CD8-positive, alpha-beta memory T cell (primary cell): ENCODE measurements at regions of chr12 and their contacts with region 1.

Region 1: DNA sequence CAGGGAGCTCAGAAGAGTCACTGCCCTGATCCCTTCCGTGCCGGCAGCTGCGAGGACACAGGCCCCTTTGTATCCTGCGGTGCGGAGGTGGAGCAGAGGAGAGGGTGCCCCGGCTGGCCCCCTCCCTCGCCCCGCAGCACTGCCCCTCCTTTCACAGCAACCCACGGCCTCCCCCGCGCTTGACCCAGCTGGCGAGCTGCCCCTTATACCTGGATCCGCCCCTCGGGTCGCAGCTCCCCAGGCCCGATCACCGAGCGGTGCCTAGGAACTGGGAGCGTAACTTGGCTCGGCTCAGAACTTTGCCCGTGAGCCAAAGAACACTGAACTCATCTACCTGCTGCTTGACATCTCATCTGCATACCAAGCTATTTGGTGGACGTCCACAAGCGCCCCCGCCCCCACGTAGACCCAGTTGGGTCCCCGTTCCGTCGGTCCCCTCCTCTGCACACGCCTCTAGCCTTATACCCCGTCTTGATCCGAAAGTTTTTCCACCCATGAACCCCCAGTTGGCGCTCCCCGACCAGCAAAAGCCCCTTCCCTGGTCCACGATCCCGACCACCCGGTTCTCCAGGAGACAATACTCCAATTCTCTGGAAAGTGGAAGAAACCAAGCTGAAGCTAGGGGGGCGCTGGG is 697 bp upstream of the DNAJC14 start:
- DNase-seq: peak in 3 of 5 donors; percentile 8 to 63 (median 42)
- H3K4me3 ChIP-seq: peak overlapping the region; percentile 96
- H3K4me3 Mint-ChIP-seq: peak overlapping the region; percentile 97 to 99 (median 98)
- H3K27ac ChIP-seq: peak overlapping the region; percentile 79
- H3K27ac Mint-ChIP-seq: peak overlapping the region; percentile 84 to 98 (median 96)
- H3K4me1 ChIP-seq: peaks cover 50% of the 10 kb centered on the region
- H3K4me1 Mint-ChIP-seq: peaks cover 46 to 69% (median 54%) of the 10 kb centered on the region in 3 donors
- H3K27me3 ChIP-seq: no peaks in the 10 kb centered on the region
- H3K27me3 Mint-ChIP-seq: no peaks in the 10 kb centered on the region

Region 2: DNA sequence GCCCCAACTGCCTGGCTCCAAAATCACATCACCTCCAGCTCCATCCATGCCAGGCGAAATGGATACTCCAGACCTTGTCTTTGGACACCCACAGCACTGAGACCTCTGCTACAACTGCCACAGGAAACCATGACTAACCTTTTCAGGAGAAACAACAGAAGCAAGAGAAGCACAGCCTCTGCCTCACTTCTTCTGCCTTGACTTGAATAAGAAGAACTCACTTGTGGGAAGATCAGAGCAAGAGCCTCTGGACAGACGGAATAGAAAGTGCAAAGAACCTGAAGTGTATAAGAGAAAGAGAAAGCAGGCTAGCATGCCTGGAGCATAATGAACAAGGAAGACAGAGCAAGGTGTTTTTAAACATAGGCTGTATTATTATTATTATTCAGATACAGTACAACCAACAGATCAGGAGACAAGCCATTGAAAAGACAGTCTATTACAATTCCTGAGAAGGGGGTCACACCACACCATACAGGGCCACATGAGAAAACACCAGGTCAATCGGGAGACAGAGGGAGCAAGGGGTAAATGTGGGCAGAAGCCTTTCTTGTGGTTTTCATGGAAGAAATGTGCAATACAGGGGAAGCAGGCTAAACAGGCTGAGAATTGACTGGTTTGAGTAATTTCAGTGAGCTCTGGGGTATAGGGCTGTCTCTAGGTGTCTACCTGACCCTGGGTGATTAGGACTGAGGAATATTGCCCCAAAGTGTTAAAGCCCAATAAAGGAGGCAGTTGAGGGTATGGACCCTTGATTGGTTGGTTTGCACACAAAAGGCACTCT is 200.8 kb before region 1 on chr12:
- CTCF ChIA-PET with region 1: no interaction called
- POLR2A ChIA-PET with region 1: no interaction called
- DNase-seq: no peak
- H3K4me3 ChIP-seq: no peak overlapping the region
- H3K4me3 Mint-ChIP-seq: no peak overlapping the region
- H3K27ac ChIP-seq: no peak overlapping the region
- H3K27ac Mint-ChIP-seq: no peak overlapping the region
- H3K4me1 ChIP-seq: no peaks in the 10 kb centered on the region
- H3K4me1 Mint-ChIP-seq: no peaks in the 10 kb centered on the region
- H3K27me3 ChIP-seq: no peaks in the 10 kb centered on the region
- H3K27me3 Mint-ChIP-seq: peaks cover 10 to 12% of the 10 kb centered on the region in 2 donors

Region 3: GRCh38 chr12:55817346-55818139 is 12.5 kb before region 1 on chr12 and contains the starts of genes ORMDL2 and SARNP:
- CTCF ChIA-PET with region 1: interaction called, 52 read pairs
- POLR2A ChIA-PET with region 1: interaction called, 105 read pairs
- DNase-seq: peak; percentile 91 to 99 (median 98)
- H3K4me3 ChIP-seq: peak within 1 kb of the TSS; percentile 94
- H3K4me3 Mint-ChIP-seq: no peak within 1 kb of the TSS
- H3K27ac ChIP-seq: peak within 1 kb of the TSS; percentile 86
- H3K27ac Mint-ChIP-seq: no peak within 1 kb of the TSS
- H3K4me1 ChIP-seq: peaks cover 39% of the 10 kb centered on the region
- H3K4me1 Mint-ChIP-seq: peaks cover 27 to 39% (median 36%) of the 10 kb centered on the region in 3 donors
- H3K27me3 ChIP-seq: no peaks in the 10 kb centered on the region
- H3K27me3 Mint-ChIP-seq: no peaks in the 10 kb centered on the region
- total RNA-seq, gene ORMDL2: 49.0 to 49.7 TPM
- total RNA-seq, gene SARNP: 89.7 to 103 TPM

Region 4: GRCh38 chr12:55926738-55927587 is 96.9 kb after region 1 on chr12:
- CTCF ChIA-PET with region 1: interaction called, 11 read pairs
- POLR2A ChIA-PET with region 1: interaction called, 17 read pairs
- DNase-seq: peak; percentile 82 to 94 (median 86)
- H3K4me3 ChIP-seq: peak overlapping the region; percentile 83
- H3K4me3 Mint-ChIP-seq: peak overlapping the region; percentile 94 to 100 (median 97)
- H3K27ac ChIP-seq: peak overlapping the region; percentile 79
- H3K27ac Mint-ChIP-seq: peak overlapping the region; percentile 91 to 99 (median 96)
- H3K4me1 ChIP-seq: peaks cover 46% of the 10 kb centered on the region
- H3K4me1 Mint-ChIP-seq: peaks cover 55 to 61% (median 58%) of the 10 kb centered on the region in 3 donors
- H3K27me3 ChIP-seq: no peaks in the 10 kb centered on the region
- H3K27me3 Mint-ChIP-seq: peaks cover 0 to 6% of the 10 kb centered on the region in 2 donors